GM18951 (cell line): ENCODE measurements at regions of chr16 and their contacts with region 1.

Region 1: DNA sequence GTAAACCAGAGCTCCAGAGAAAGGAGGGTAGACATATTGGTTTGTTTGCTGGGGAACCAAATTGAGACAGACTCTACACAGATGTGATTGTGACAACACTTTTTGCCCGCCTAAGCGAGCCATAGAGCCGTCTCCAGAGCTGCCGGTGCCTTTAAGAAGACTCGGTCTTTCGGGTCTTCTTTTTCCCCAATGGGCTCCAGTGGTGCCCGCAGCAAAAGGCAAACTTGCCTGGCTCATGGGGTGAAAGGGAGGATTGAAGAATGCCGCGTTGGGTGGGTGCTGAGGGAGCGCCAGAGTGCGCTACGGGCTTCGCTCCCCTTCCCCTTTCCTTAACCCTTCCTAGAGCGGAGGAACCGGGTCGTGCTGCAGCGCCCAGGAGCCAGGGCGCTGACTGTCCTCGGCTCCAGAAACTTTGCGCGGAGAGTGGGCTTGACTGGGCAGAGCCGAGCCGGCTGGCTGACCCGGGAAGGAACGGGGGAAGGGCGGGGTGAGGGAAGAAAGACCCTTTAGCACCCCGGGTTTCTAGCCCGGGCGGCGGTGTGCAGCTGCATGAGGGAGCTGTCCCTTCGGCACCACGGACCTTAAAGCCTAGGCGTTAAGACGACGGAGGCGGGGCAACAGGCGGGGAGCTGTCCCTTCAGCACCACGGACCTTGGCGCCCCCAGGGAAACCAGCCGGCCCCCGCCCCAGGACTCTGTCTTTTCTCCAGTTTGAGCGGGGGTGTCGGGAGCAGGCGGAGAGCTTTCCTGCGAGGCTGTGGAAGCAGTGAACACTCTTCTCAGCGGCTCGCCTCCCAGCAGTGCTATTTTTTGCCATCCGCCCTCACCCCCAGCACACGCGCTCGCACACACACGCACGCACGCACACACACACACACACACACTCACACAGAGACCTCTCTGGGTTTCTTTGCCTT is at the start of gene CACNG3:
- POLR2A ChIP-seq: no peak

Region 2: GRCh38 chr16:23784811-23785447 is 470.8 kb before region 1 on chr16:
- in situ Hi-C with region 1: loop called (anchors 5 kb)
- POLR2A ChIP-seq: no peak